ENCODE measurements at regions of chr7 and their contacts with region 1.

Region 1: GRCh38 chr7:81499262-81500116 is 270.4 kb downstream of the HGF start:
- DNase-seq: peak; percentile 59
- H3K4me3 ChIP-seq: no peak overlapping the region
- CTCF ChIP-seq: peak; percentile 55

Region 2: GRCh38 chr7:81457852-81458522 is 41.5 kb before region 1 on chr7:
- CTCF ChIA-PET with region 1: no interaction called
- POLR2A ChIA-PET with region 1: no interaction called
- DNase-seq: no peak
- H3K4me3 ChIP-seq: no peak overlapping the region
- CTCF ChIP-seq: peak; percentile 27

Region 3: GRCh38 chr7:81516898-81517297 is 17.4 kb after region 1 on chr7:
- CTCF ChIA-PET with region 1: interaction called, 15 read pairs
- POLR2A ChIA-PET with region 1: no interaction called
- DNase-seq: no peak
- H3K4me3 ChIP-seq: no peak overlapping the region
- CTCF ChIP-seq: no peak

Region 4: GRCh38 chr7:81769891-81770727 is 270.6 kb after region 1 on chr7 and contains the start of gene HGF:
- CTCF ChIA-PET with region 1: interaction called, 31 read pairs
- POLR2A ChIA-PET with region 1: interaction called, 3 read pairs
- DNase-seq: no peak
- H3K4me3 ChIP-seq: peak within 1 kb of the TSS; percentile 52
- CTCF ChIP-seq: peak; percentile 6

Region 5: DNA sequence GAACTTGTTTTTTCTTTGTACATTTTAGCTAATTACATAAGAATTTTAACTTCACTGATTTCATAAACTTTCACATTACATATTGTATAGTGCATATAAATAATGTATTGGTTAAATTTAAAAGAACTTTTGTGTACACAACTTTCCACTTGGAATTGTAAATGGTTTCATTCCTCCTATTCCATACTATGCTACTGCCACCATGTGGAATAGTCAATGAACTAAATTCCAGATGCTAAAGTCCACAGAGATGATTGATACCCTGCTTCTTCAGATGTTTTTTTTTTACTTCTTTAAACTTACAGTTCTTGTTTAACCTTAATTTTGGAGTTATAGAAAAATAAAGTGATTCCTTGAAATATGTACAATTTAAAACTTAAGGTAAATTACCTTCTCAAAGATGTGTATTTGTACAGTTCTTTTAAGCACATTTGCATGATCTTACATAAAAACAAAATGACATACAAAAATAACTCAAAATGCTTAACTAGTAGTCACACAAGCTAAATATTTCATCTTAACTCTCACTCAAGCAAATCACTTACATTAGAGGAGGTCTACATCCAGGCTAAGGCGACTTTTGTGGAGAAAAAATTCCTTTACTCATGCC is 518.0 kb after region 1 on chr7:
- CTCF ChIA-PET with region 1: interaction called, 225 read pairs
- POLR2A ChIA-PET with region 1: no interaction called
- DNase-seq: no peak
- H3K4me3 ChIP-seq: no peak overlapping the region
- CTCF ChIP-seq: peak; percentile 47

Region 6: GRCh38 chr7:82572195-82572880 is 1072.8 kb after region 1 on chr7:
- CTCF ChIA-PET with region 1: interaction called, 20 read pairs
- POLR2A ChIA-PET with region 1: no interaction called
- DNase-seq: peak; percentile 24
- H3K4me3 ChIP-seq: no peak overlapping the region
- CTCF ChIP-seq: peak; percentile 87

Region 7: DNA sequence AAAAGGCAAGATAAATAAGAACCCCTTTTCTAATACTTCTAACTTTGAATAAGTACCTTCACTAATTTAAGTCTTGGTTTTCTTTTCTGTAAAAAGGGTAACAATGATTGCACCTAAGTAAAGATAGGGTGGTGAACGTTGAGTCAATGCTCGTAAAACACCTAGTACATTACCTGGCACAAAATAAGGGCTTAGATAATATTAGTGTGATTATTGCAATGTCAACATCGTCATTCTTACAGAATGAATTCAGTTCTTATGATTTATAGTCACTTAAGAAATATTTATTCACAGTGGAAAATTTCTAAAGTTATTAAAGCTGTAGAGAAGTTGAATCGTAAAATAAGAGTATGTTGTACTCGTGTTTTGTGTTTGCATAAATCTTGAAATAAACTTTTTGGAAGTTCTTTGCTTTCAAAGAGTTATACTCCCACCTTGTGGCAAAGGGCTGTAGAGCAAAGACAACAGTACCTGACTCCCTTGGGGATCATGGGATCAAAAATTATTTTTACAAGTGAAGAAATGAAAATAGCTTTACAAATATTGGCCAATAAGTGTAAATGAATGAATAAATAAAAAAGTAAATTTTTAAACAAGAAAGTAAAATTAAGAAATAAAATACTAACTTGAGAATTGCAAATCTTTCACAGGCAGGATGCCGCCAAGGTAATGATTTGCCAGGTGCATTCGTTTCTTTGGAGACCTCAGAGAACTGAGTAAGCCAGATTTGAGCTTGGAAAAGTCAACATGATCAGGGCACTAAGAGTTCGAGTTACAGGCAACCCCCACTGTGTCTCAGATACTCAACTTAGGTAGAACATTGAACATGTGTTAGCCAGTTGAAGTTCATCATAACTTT is 1229.9 kb after region 1 on chr7:
- CTCF ChIA-PET with region 1: interaction called, 38 read pairs
- POLR2A ChIA-PET with region 1: no interaction called
- DNase-seq: no peak
- H3K4me3 ChIP-seq: no peak overlapping the region
- CTCF ChIP-seq: peak; percentile 41

Measured in AG04449 (cell line).